A673 (cell line): ENCODE measurements at regions of chr15 and their contacts with region 1.

Region 1: GRCh38 chr15:76235186-76235826 is 76.0 kb downstream of the ETFA start:
- DNase-seq: peak; percentile 78
- H3K4me3 ChIP-seq: no peak overlapping the region
- H3K27ac ChIP-seq: no peak overlapping the region
- H3K4me1 ChIP-seq: peaks cover 12% of the 10 kb centered on the region
- H3K27me3 ChIP-seq: no peaks in the 10 kb centered on the region
- CTCF ChIP-seq: peak; percentile 62

Region 2: DNA sequence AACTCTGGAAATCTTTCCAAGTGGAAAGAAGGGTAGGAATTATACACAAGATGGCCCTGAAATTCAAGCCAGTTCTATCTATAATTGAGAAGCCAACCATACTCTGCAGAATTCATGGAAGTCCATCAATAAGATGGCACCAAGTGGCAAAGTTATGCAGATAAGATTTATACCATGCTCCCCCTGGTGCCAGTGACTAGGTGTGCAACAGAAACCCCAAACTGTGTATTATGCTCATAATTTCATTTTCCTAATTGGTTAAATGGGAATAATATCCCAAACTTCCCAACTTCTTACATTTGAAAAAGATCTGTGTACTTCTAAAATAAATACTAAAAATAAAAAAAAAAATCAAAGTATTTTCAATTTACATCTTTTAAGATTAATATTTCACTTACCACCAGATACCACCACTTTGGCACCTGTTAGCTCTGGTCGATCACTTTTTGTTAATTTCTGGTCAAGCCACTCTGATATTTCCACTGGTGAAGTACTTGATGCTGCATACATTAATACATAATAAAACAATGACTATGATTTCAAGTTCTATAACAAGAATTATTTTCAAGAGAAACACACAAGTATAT is 50.0 kb after region 1 on chr15:
- CTCF ChIA-PET with region 1: no interaction called
- POLR2A ChIA-PET with region 1: no interaction called
- intact Hi-C with region 1: loop called (anchors 5 kb)
- DNase-seq: peak; percentile 40
- H3K4me3 ChIP-seq: no peak overlapping the region
- H3K27ac ChIP-seq: no peak overlapping the region
- H3K4me1 ChIP-seq: no peaks in the 10 kb centered on the region
- H3K27me3 ChIP-seq: no peaks in the 10 kb centered on the region
- CTCF ChIP-seq: peak; percentile 65

Region 3: GRCh38 chr15:76330080-76330680 is 94.9 kb after region 1 on chr15:
- CTCF ChIA-PET with region 1: interaction called, 8 read pairs
- POLR2A ChIA-PET with region 1: no interaction called
- intact Hi-C with region 1: loop called (anchors 5 kb)
- DNase-seq: peak; percentile 71
- H3K4me3 ChIP-seq: no peak overlapping the region
- H3K27ac ChIP-seq: no peak overlapping the region
- H3K4me1 ChIP-seq: peaks cover under 1% of the 10 kb centered on the region
- H3K27me3 ChIP-seq: peaks cover 10% of the 10 kb centered on the region
- CTCF ChIP-seq: peak; percentile 62

Region 4: GRCh38 chr15:76866716-76867321 is 631.5 kb after region 1 on chr15:
- CTCF ChIA-PET with region 1: no interaction called
- POLR2A ChIA-PET with region 1: no interaction called
- intact Hi-C with region 1: loop called (anchors 5 kb)
- DNase-seq: peak; percentile 63
- H3K4me3 ChIP-seq: no peak overlapping the region
- H3K27ac ChIP-seq: no peak overlapping the region
- H3K4me1 ChIP-seq: peaks cover 4% of the 10 kb centered on the region
- H3K27me3 ChIP-seq: no peaks in the 10 kb centered on the region
- CTCF ChIP-seq: peak; percentile 71